ENCODE measurements at regions of chr7 and their contacts with region 1.

Region 1: GRCh38 chr7:604001-604883 is 84.6 kb upstream of the PDGFA start:
- DNase-seq: peak; percentile 83 to 98 (median 95)
- ATAC-seq: peak; percentile 71
- H3K4me3 ChIP-seq: peak overlapping the region; percentile 56 to 81
- H3K4me3 Mint-ChIP-seq: peak overlapping the region; percentile 90
- H3K27ac ChIP-seq: peak overlapping the region; percentile 96 to 100
- H3K27ac Mint-ChIP-seq: peak overlapping the region; percentile 100
- H3K4me1 ChIP-seq: peaks cover 80% of the 10 kb centered on the region
- H3K4me1 Mint-ChIP-seq: peaks cover 63% of the 10 kb centered on the region
- H3K27me3 ChIP-seq: no peaks in the 10 kb centered on the region
- H3K27me3 Mint-ChIP-seq: no peaks in the 10 kb centered on the region
- CTCF ChIP-seq: no peak

Region 2: DNA sequence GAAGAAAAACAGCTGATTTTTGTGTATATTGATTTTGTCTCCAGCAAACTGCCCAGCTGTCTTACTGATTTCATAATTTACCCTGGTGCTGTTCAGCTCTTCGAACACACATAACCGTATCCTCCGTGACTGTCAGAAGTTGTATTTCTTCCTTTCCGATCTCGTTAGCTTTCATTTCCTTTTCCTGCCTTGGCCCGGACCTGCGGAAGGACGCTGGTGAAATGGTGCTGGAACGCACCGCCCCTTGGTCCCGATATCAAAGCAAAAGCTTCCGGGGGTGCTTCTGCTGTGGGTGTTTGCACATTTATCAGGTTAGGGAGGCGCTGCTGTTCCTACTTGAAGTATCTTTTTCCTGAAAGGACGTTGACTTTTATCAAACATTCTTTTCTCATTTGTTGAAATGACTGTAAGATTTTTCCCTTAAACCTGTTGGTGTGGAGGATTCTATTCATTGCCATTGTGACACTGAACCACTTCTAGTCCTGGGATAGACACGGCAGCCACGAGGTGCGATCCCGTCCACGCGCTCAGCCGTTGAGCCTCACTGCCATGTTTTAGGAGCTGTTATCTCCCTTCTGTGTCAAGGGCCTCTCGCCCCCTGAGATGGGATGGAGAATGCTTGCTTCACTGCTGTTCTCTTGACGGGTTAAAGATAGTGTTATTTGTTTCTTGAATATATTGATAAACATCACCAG is 241.7 kb before region 1 on chr7:
- CTCF ChIA-PET with region 1: no interaction called
- POLR2A ChIA-PET with region 1: interaction called, 5 read pairs
- intact Hi-C with region 1: loop called in 1 of 2 experiments (anchors 5 kb)
- DNase-seq: peak in 8 of 9 experiments; percentile 41 to 84 (median 60)
- ATAC-seq: peak; percentile 43
- H3K4me3 ChIP-seq: peak overlapping the region; percentile 9 to 27
- H3K4me3 Mint-ChIP-seq: peak overlapping the region; percentile 80
- H3K27ac ChIP-seq: peak overlapping the region; percentile 19 to 67
- H3K27ac Mint-ChIP-seq: peak overlapping the region; percentile 92
- H3K4me1 ChIP-seq: peaks cover 78% of the 10 kb centered on the region
- H3K4me1 Mint-ChIP-seq: peaks cover 73% of the 10 kb centered on the region
- H3K27me3 ChIP-seq: no peaks in the 10 kb centered on the region
- H3K27me3 Mint-ChIP-seq: no peaks in the 10 kb centered on the region
- CTCF ChIP-seq: no peak

Region 3: DNA sequence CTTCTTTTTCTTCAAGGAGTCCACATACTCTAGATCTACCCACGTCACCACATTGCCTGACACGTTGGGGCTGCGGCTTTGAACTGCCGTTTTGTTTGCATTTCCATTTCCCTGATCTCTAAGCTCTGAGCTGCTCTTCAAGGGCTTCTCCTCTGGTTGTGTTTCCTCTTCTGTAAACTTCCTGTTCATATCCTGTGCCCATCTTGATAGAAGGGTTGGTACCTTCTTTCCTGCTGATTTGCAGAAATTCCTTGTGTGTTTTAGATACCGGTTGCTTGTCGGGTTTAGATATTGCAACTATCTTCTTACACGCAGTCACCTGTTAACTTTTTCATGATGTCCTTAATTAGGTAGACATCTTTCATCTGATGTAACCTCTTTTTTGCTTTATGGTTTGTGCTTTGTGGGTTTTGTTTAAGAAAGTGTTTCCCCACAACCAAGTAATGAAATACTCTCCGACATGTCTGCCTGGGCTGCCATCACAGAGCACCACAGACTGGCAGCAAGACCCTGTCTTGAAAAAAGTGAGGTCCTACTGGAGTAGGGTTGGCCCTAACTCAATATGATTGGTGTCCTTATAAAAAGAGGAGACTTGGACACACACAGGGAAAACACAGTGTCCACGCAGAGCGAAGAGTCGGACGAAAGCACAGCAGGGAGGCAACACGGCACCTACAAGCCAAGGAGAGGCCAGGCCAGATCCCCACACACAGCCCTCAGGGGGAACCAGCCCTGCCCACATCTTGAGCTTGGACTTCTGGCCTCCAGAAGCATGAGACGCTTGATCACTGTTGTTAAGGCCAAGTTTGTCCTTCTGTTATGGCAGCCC is 14.5 kb after region 1 on chr7:
- CTCF ChIA-PET with region 1: interaction called, 6 read pairs
- POLR2A ChIA-PET with region 1: interaction called, 24 read pairs
- intact Hi-C with region 1: loop called (anchors 1 kb)
- DNase-seq: peak; percentile 51 to 95 (median 77)
- ATAC-seq: peak; percentile 76
- H3K4me3 ChIP-seq: peak overlapping the region; percentile 3 to 30
- H3K4me3 Mint-ChIP-seq: peak overlapping the region; percentile 88
- H3K27ac ChIP-seq: peak overlapping the region; percentile 85 to 92
- H3K27ac Mint-ChIP-seq: peak overlapping the region; percentile 100
- H3K4me1 ChIP-seq: peaks cover 53% of the 10 kb centered on the region
- H3K4me1 Mint-ChIP-seq: peaks cover 63% of the 10 kb centered on the region
- H3K27me3 ChIP-seq: no peaks in the 10 kb centered on the region
- H3K27me3 Mint-ChIP-seq: no peaks in the 10 kb centered on the region
- CTCF ChIP-seq: no peak

Region 4: GRCh38 chr7:726084-726853 is 122.0 kb after region 1 on chr7 and contains the start of gene DNAAF5:
- CTCF ChIA-PET with region 1: no interaction called
- POLR2A ChIA-PET with region 1: interaction called, 3 read pairs
- intact Hi-C with region 1: loop called in 1 of 2 experiments (anchors 1 kb)
- DNase-seq: peak; percentile 69 to 91 (median 86)
- ATAC-seq: peak; percentile 87
- H3K4me3 ChIP-seq: peak within 1 kb of the TSS; percentile 65 to 77
- H3K4me3 Mint-ChIP-seq: peak within 1 kb of the TSS; percentile 79
- H3K27ac ChIP-seq: peak within 1 kb of the TSS; percentile 65 to 67
- H3K27ac Mint-ChIP-seq: peak within 1 kb of the TSS; percentile 75
- H3K4me1 ChIP-seq: peaks cover 14% of the 10 kb centered on the region
- H3K4me1 Mint-ChIP-seq: peaks cover 17% of the 10 kb centered on the region
- H3K27me3 ChIP-seq: no peaks in the 10 kb centered on the region
- H3K27me3 Mint-ChIP-seq: no peaks in the 10 kb centered on the region
- CTCF ChIP-seq: no peak
- total RNA-seq, gene DNAAF5: 4.3 to 4.9 TPM

Region 5: DNA sequence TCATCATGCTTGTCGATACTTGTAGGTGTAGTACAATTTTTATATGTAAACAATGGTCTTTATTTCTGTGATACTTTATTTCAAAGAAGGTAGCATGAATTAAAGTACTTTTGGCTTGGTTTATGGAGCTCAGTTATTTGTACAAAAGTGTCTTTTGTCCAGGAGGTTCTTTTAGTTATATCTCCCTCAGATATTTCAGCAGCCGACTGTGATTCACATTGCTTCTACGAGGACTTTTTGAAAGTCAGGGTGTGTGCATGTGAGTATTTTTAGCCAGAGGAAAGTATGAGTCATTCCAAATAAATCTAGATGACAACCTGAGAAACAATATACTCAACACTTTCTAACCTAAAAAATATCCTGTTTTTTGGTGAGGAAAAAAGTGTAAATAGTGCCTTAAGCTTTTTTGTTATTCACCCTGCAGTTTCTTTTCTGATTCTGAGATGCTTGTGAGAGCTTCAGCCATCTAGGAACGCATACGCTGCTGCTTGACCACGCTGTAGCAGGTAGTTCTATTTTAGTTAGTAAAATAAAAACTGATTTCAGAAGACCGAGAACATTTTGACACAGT is 227.4 kb after region 1 on chr7:
- CTCF ChIA-PET with region 1: no interaction called
- POLR2A ChIA-PET with region 1: no interaction called
- intact Hi-C with region 1: loop called in 1 of 2 experiments (anchors 10 kb)
- DNase-seq: peak in 3 of 9 experiments; percentile 23 to 61 (median 30)
- ATAC-seq: peak; percentile 15
- H3K4me3 ChIP-seq: no peak overlapping the region
- H3K4me3 Mint-ChIP-seq: peak overlapping the region; percentile 75
- H3K27ac ChIP-seq: peak overlapping the region; percentile 66 to 75
- H3K27ac Mint-ChIP-seq: peak overlapping the region; percentile 92
- H3K4me1 ChIP-seq: peaks cover 27% of the 10 kb centered on the region
- H3K4me1 Mint-ChIP-seq: peaks cover 48% of the 10 kb centered on the region
- H3K27me3 ChIP-seq: no peaks in the 10 kb centered on the region
- H3K27me3 Mint-ChIP-seq: no peaks in the 10 kb centered on the region
- CTCF ChIP-seq: no peak

Region 6: DNA sequence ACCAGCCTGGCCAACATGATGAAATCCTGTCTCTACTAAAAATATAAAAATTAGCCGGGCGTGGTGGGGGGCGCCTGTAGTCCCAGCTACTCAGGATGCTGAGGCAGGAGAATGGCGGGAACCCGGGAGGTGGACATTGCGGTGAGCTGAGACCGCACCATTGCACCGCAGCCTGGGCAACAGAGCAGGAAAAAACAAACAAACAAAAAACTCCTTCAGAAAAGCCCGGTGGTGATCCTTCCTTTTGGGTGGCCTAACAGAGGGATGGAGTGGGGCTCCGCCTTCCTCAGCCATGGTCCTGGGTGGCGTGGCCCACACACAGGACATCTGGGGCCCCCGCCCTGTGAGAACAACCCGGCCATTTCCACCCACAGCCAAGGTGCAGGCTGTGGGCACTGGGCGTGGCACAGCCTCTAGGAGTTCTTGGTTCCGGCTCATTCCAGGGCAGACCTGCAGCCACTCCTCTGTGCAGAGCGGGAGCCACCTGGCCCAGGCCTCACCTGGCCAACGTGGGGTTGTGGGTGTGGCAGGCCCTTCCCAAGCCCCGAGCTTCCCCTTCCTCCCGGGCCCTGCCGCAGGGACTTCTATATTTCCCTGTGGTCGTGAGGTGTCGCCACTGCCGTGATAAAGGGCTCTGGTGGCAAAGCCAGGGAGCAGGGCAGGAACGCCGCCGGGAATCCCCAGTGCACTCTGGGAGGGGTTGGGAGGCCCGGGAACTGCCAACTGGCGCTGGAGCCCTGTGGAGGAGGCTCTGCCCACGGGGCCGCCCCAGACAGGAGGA is 309.7 kb after region 1 on chr7:
- CTCF ChIA-PET with region 1: no interaction called
- POLR2A ChIA-PET with region 1: no interaction called
- intact Hi-C with region 1: no loop called
- DNase-seq: peak in 1 of 9 experiments; percentile 13
- ATAC-seq: no peak
- H3K4me3 ChIP-seq: no peak overlapping the region
- H3K4me3 Mint-ChIP-seq: no peak overlapping the region
- H3K27ac ChIP-seq: no peak overlapping the region
- H3K27ac Mint-ChIP-seq: no peak overlapping the region
- H3K4me1 ChIP-seq: peaks cover 10% of the 10 kb centered on the region
- H3K4me1 Mint-ChIP-seq: peaks cover 14% of the 10 kb centered on the region
- H3K27me3 ChIP-seq: no peaks in the 10 kb centered on the region
- H3K27me3 Mint-ChIP-seq: no peaks in the 10 kb centered on the region
- CTCF ChIP-seq: no peak

Region 7: GRCh38 chr7:1103009-1103788 is 499.0 kb after region 1 on chr7:
- CTCF ChIA-PET with region 1: no interaction called
- POLR2A ChIA-PET with region 1: no interaction called
- intact Hi-C with region 1: no loop called
- DNase-seq: peak in 1 of 9 experiments; percentile 25
- ATAC-seq: no peak
- H3K4me3 ChIP-seq: peak overlapping the region in 1 of 2 experiments; percentile 46
- H3K4me3 Mint-ChIP-seq: peak overlapping the region; percentile 73
- H3K27ac ChIP-seq: peak overlapping the region in 1 of 2 experiments; percentile 13
- H3K27ac Mint-ChIP-seq: no peak overlapping the region
- H3K4me1 ChIP-seq: peaks cover 5% of the 10 kb centered on the region
- H3K4me1 Mint-ChIP-seq: peaks cover 16% of the 10 kb centered on the region
- H3K27me3 ChIP-seq: no peaks in the 10 kb centered on the region
- H3K27me3 Mint-ChIP-seq: no peaks in the 10 kb centered on the region
- CTCF ChIP-seq: no peak

Region 8: GRCh38 chr7:2248984-2249694 is 1644.9 kb after region 1 on chr7:
- CTCF ChIA-PET with region 1: no interaction called
- POLR2A ChIA-PET with region 1: no interaction called
- intact Hi-C with region 1: no loop called
- DNase-seq: peak in 1 of 9 experiments; percentile 51
- ATAC-seq: peak; percentile 11
- H3K4me3 ChIP-seq: no peak overlapping the region
- H3K4me3 Mint-ChIP-seq: no peak overlapping the region
- H3K27ac ChIP-seq: peak overlapping the region in 1 of 2 experiments; percentile 22
- H3K27ac Mint-ChIP-seq: peak overlapping the region; percentile 37
- H3K4me1 ChIP-seq: peaks cover 11% of the 10 kb centered on the region
- H3K4me1 Mint-ChIP-seq: peaks cover 19% of the 10 kb centered on the region
- H3K27me3 ChIP-seq: no peaks in the 10 kb centered on the region
- H3K27me3 Mint-ChIP-seq: no peaks in the 10 kb centered on the region
- CTCF ChIP-seq: no peak

Measured in CD8-positive, alpha-beta T cell (primary cell).